ENCODE measurements at regions of chr9 and their contacts with region 1.

Region 1: DNA sequence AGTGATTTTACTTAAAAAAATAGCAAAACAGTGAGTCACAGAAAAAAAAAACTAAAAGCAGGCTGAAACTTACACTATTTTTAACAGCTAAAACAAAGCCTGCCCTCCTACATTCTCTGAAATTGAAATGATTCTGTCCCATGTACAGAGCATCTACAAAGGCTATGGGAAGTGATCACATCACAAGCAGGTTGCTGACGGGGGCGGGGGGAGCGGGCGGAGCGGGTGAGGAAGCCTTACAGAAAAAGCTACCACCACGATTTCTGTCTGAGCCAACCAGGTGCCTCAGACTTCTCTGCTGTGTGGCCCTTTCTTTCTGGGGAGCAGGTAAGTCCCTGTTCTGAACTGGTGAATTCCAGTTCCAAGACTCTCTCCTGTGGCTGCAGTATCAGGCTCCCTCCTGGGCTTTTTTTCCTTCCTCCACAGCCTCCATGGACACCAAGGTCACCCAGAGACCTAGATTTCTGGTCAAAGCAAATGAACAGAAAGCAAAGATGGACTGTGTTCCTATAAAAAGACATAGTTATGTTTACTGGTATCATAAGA is 104.9 kb downstream of the ANKRD18B start:
- DNase-seq: no peak
- ATAC-seq: peak; percentile 54; the same call in 1 of the 2 replicates
- H3K4me3 ChIP-seq: peak overlapping the region in 1 of 2 experiments; percentile 1; a peak in 1 of 4 replicates
- H3K27ac ChIP-seq: no peak overlapping the region
- H3K4me1 ChIP-seq: peaks cover 6% of the 10 kb centered on the region; the same call in 1 of the 2 replicates
- H3K27me3 ChIP-seq: peaks cover 35% of the 10 kb centered on the region
- CTCF ChIP-seq: no peak

Region 2: GRCh38 chr9:33106827-33107621 is 521.9 kb before region 1 on chr9:
- CTCF ChIA-PET with region 1: no interaction called
- POLR2A ChIA-PET with region 1: no interaction called
- in situ Hi-C with region 1: no loop called
- intact Hi-C with region 1: no loop called
- DNase-seq: no peak
- ATAC-seq: no peak
- H3K4me3 ChIP-seq: no peak overlapping the region
- H3K27ac ChIP-seq: no peak overlapping the region
- H3K4me1 ChIP-seq: no peaks in the 10 kb centered on the region
- H3K27me3 ChIP-seq: no peaks in the 10 kb centered on the region
- CTCF ChIP-seq: no peak

Region 3: DNA sequence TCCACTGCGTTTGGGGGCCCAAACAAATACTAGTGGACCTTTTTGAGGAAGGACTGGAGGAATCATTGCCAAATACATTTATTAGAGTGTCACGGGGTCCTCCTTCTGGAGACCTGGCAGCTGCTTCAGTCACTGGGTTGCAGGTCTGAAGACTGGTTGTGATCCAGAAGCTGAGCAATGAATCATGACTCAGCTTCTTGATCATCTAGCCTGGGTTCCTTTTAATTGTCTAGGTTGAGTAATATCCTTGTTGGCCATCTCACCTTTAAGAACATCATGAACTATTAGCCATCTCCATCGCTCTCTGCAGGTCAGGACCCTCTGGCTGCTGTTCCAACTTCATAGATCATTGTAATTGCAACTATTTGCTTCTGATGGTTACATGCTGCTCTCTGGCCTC is 534.5 kb after region 1 on chr9:
- CTCF ChIA-PET with region 1: no interaction called
- POLR2A ChIA-PET with region 1: interaction called, 19 read pairs
- in situ Hi-C with region 1: no loop called
- intact Hi-C with region 1: no loop called
- DNase-seq: no peak
- ATAC-seq: no peak
- H3K4me3 ChIP-seq: no peak overlapping the region
- H3K27ac ChIP-seq: no peak overlapping the region
- H3K4me1 ChIP-seq: no peaks in the 10 kb centered on the region
- H3K27me3 ChIP-seq: no peaks in the 10 kb centered on the region
- CTCF ChIP-seq: no peak